ENCODE measurements at regions of chr3 and their contacts with region 1.

Region 1: DNA sequence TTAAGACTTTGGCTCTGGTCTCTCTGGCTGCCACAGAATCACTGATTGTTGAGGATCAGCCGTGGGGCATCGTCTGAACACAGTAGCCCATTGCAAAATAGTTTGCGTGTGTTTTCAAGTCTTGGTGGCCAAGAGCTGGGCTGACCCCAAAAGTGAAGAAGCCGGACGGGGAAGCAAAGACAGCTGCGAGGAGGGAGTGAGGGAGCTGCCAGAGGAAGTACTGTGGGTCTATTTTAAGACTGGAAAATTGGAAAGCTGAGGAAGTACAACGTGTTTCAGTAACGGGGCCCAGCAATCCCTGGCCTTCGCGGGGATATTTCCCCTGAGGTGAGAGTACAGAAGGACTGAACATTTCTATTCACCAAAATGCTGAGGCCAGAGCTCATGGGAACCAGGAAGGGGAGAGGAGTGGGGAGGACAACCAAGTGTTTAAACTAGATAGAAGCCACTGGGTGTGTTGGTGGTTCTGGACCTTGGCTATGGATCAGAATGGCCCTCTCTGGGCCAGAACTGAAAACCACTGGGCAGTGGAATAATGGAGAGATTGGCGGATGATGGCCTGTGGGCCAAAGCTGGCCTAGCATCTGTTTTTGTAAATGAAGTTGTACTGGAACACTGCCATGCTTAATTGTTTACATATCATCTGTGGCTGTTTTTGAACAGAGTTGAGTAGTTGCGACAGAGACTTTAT is 34.1 kb upstream of the LIMD1 start:
- DNase-seq: peak; percentile 88
- ATAC-seq: peak; percentile 95

Region 2: DNA sequence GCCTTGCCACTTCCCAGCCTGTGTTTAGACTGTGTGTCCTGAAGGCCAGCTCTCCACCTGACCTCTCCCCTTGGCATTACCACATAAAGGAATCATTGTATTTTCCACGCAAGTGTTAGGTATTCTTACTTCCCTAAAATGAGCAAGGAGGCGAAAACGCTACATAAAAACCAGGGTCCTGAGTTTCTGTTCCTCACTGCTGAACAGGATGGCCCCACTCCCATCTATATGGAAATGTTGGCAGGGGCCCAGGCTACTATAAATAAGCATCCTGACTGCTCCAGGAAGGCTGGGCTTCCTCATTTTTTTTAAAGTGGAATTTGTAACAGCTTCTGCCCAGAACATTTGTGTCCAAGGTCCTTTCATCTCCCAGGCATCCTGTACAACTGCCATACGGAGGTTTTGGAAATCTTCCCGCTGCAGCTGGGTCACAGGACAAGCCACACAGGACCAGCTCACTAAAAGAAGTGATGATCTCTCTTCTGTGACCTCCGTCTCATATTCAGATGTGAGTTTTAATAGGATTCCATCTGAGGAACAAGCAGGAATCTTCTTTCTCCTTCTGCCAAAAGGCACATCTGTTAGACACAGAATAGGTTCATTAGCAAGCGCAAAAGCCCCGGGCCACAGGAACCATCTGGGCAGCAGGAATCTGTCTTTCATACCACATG is 22.3 kb before region 1 on chr3:
- intact Hi-C with region 1: loop called (anchors 2 kb)
- DNase-seq: no peak
- ATAC-seq: peak; percentile 85

Region 3: DNA sequence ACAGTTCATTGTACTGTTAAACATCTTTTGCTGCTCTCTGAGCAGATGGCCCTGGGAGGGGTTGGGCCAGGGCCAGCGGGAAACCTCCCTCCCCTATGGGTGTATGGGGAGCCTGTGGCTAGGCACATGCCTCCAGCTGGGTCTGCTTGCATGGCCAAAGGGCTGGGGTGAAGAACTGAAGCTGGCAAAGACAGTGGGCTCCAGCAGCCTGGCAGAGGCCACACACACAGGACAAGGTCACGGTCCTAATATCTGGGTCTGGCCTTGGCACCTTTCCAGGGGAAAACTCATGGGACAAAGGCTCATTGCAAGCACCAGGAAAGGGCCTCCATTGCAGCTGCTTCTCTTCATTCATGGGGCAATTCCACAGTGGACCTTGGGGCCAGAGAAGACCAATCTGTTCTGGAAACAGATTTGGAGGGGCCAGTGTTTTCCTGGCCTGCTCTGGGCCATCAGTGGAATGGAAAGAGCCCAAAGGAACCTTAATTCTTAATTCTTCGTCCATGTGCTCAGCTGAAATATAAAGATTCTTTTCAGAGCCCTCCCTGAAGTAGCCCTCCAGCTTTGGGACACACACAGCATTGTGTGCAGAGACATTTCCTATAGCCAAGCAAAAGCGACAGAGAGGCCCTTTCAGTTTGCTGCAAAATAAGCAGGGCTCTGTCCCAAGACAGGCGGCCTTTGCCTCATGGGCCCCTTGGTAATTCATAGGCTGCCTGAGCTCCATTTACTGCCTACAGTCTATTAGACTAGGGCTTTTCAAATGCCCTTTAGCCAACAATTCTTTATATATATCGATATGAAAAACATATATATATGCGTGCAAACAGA is 22.8 kb after region 1 on chr3:
- intact Hi-C with region 1: loop called (anchors 1 kb)
- DNase-seq: peak; percentile 89
- ATAC-seq: peak; percentile 93

Region 4: GRCh38 chr3:45631486-45631885 is 71.1 kb after region 1 on chr3:
- intact Hi-C with region 1: no loop called
- DNase-seq: no peak
- ATAC-seq: peak; percentile 51